Right cardiac atrium (tissue), 5 donors: ENCODE measurements at regions of chr1 and their contacts with region 1.

Region 1: GRCh38 chr1:84122780-84123382 is 21.2 kb upstream of the PRKACB start:
- DNase-seq: peak; percentile 36 to 81 (median 44)
- ATAC-seq: peak; percentile 59 to 76
- H3K4me3 ChIP-seq: no peak overlapping the region
- H3K27ac ChIP-seq: no peak overlapping the region
- H3K4me1 ChIP-seq: peaks cover 2% of the 10 kb centered on the region
- H3K27me3 ChIP-seq: no peaks in the 10 kb centered on the region

Region 2: DNA sequence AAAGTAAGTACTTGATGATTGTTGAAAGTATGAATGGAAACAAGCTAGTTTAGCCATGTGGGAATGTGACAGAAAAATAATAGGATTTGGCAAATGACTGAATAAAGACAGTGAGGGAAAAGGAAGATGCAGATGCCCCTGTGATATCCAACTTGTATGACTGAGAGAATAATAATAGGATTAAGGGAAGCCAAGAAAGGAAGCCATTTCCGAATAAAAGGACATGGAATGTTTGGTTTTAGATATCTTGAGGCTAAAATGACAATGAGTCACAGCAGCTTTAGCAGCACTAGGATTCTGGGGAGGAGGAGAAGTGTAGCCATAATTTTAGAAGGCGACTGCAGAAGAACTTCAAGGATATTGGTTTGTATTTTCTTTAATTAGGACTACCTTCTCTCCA is 233.2 kb before region 1 on chr1:
- intact Hi-C with region 1: no loop called
- DNase-seq: no peak
- ATAC-seq: no peak
- H3K4me3 ChIP-seq: no peak overlapping the region
- H3K27ac ChIP-seq: no peak overlapping the region
- H3K4me1 ChIP-seq: no peaks in the 10 kb centered on the region
- H3K27me3 ChIP-seq: no peaks in the 10 kb centered on the region

Region 3: DNA sequence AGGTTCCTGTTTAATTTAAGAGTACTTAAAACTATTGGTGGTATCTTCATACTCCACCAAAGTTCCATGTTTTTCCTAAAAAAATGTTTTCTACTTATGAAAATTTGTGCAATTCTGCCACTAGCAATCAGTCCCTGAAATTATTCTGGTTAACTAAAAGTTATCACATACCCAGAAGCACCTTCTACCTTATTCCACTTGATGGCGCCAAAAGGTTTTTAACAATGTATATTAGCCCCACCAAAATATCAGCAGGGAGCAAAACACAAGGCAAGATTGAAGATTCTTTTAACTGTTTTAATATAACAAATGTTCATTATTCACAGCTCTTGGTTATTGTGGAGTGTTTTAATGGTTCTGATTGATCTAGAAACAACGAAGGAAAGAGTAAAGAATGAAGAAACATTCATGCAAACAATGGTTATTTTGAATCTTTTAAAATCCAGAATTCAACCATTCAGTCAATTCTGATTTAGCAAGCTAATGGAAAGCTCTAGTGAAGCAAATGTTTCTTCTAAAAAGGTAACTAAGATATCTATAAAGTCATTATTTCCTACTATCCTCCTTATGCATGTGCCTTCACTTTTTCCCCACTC is 191.1 kb before region 1 on chr1:
- intact Hi-C with region 1: loop called (anchors 5 to 10 kb)
- DNase-seq: no peak
- ATAC-seq: peak; percentile 67 to 77
- H3K4me3 ChIP-seq: no peak overlapping the region
- H3K27ac ChIP-seq: no peak overlapping the region
- H3K4me1 ChIP-seq: no peaks in the 10 kb centered on the region
- H3K27me3 ChIP-seq: no peaks in the 10 kb centered on the region